Heart right ventricle (tissue), 16 donors: ENCODE measurements at regions of chr5 and their contacts with region 1.

Region 1: GRCh38 chr5:159257629-159258283 is 5.3 kb upstream of the UBLCP1 start:
- DNase-seq: no peak
- ATAC-seq: no peak
- H3K4me3 ChIP-seq: no peak overlapping the region
- H3K27ac ChIP-seq: no peak overlapping the region
- H3K4me1 ChIP-seq: peaks cover 0 to 9% (median 5%) of the 10 kb centered on the region in 9 donors
- H3K27me3 ChIP-seq: peaks cover 0 to 18% (median 0%) of the 10 kb centered on the region in 7 donors
- CTCF ChIP-seq: peak in 2 of 9 donors; percentile 21 to 43

Region 2: DNA sequence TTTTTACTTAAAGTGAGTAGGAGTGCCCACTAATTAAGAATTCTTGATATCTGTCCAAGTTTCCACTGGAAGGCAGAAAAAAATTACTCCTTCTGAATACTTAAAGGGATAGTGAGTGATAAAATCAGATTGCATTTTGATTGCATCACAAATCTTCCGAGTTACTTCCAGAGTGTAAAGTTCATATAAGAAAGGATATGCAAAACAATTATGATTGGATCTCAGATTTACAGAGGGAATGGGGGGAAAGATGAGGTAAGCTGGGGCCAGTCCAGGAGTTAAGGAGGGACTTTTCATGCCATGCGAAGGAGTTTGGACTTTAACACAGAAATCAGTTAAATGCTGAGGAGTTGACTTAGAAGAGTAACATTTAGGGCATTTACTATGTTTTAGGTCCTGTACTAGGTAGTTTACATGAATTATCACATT is 39.1 kb before region 1 on chr5:
- intact Hi-C with region 1: loop called in 3 of 10 experiments (anchors 5 kb)
- DNase-seq: no peak
- ATAC-seq: no peak
- H3K4me3 ChIP-seq: no peak overlapping the region
- H3K27ac ChIP-seq: no peak overlapping the region
- H3K4me1 ChIP-seq: no peaks in the 10 kb centered on the region
- H3K27me3 ChIP-seq: no peaks in the 10 kb centered on the region
- CTCF ChIP-seq: no peak

Region 3: GRCh38 chr5:159797261-159797970 is 539.7 kb after region 1 on chr5:
- intact Hi-C with region 1: no loop called
- DNase-seq: no peak
- ATAC-seq: no peak
- H3K4me3 ChIP-seq: no peak overlapping the region
- H3K27ac ChIP-seq: no peak overlapping the region
- H3K4me1 ChIP-seq: no peaks in the 10 kb centered on the region
- H3K27me3 ChIP-seq: no peaks in the 10 kb centered on the region
- CTCF ChIP-seq: no peak